ENCODE measurements at regions of chr18 and their contacts with region 1.

Region 1: DNA sequence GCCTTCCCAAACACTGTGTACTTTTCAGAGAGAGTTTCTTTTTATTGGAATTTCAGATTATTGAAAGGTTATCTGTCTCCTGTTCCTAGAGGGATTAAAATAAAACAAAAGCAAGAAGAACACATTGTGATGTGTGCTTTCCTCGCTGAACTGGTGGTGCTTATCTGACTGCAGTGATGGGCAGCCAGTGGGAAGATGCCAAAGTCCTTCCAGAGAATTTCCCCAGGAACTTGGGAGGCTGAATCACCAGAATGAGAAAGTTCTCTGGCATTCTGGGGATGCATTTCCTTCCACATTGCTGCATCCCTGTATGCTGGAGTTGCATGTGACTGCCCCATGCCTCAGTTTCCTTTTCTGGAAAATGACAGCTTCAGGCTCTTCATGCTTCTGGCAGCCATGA is 53.9 kb upstream of the SEC11C start:
- DNase-seq: no peak
- ATAC-seq: no peak
- H3K4me3 ChIP-seq: no peak overlapping the region
- H3K4me3 Mint-ChIP-seq: no peak overlapping the region
- H3K27ac ChIP-seq: no peak overlapping the region
- H3K27ac Mint-ChIP-seq: no peak overlapping the region
- H3K4me1 ChIP-seq: peaks cover 0 to 8% of the 10 kb centered on the region in 2 donors
- H3K4me1 Mint-ChIP-seq: peaks cover 3 to 18% (median 13%) of the 10 kb centered on the region in 7 donors
- H3K27me3 ChIP-seq: peaks cover 0 to 4% of the 10 kb centered on the region in 2 donors
- H3K27me3 Mint-ChIP-seq: peaks cover 12 to 22% (median 20%) of the 10 kb centered on the region in 5 donors

Region 2: DNA sequence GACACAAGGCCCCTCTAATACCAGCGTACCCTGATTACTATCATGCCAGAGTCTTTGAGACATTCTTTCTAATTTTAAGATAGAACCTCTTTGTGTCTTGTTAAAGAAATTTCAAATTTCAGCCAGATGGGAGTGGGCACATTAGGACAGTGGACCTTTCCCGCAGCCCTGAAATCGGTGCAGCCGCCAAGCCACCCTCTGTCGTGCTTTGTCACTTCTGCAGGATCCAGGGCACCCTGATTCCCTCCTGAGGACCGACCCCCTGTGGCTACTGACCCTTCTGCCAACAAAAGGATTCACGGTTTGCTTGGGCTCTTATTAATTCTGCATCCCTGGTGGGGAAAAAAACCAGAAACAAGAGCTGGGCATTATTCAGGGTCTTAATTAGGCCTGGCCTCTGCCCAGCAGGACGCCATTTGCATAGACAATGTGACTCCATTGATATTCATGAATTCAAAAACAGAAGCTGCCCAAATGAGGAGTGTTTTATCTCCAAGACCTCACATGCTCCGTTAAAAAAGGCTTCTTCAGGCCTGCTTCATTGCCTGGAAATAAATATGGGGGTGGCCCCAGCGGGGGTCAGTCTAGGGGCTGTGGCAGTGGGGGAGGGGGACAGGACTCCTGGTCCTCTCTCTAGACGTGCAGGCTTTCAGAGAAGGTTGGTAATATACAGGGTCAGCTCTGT is 573.8 kb before region 1 on chr18:
- CTCF ChIA-PET with region 1: no interaction called
- POLR2A ChIA-PET with region 1: no interaction called
- intact Hi-C with region 1: loop called in 1 of 2 experiments (anchors 5 kb)
- DNase-seq: no peak
- ATAC-seq: no peak
- H3K4me3 ChIP-seq: no peak overlapping the region
- H3K4me3 Mint-ChIP-seq: no peak overlapping the region
- H3K27ac ChIP-seq: no peak overlapping the region
- H3K27ac Mint-ChIP-seq: no peak overlapping the region
- H3K4me1 ChIP-seq: no peaks in the 10 kb centered on the region
- H3K4me1 Mint-ChIP-seq: no peaks in the 10 kb centered on the region
- H3K27me3 ChIP-seq: no peaks in the 10 kb centered on the region
- H3K27me3 Mint-ChIP-seq: peaks cover 0 to 7% (median 0%) of the 10 kb centered on the region in 5 donors

Region 3: DNA sequence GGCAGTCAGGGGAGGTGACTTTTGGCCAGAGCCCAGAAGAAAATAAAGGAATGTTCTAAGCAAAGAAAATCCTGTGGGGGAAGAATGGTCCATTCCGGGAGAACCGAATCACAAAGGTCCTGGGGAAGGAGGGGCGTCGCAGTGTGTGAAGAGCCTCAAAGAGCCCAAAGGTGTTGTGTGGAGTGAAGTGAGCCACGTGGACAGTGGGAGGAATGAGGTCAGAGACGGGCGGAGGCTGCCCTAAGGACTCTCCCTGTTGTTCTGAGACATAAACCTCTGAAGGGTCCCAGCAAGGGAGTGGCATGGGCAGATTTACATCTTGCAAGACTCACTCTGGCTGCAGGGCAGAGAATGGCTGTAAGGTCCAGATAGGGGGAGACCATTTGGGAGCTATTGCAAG is 37.4 kb before region 1 on chr18:
- CTCF ChIA-PET with region 1: no interaction called
- POLR2A ChIA-PET with region 1: no interaction called
- intact Hi-C with region 1: no loop called
- DNase-seq: no peak
- ATAC-seq: no peak
- H3K4me3 ChIP-seq: no peak overlapping the region
- H3K4me3 Mint-ChIP-seq: no peak overlapping the region
- H3K27ac ChIP-seq: no peak overlapping the region
- H3K27ac Mint-ChIP-seq: no peak overlapping the region
- H3K4me1 ChIP-seq: no peaks in the 10 kb centered on the region
- H3K4me1 Mint-ChIP-seq: no peaks in the 10 kb centered on the region
- H3K27me3 ChIP-seq: peaks cover 0 to 3% of the 10 kb centered on the region in 2 donors
- H3K27me3 Mint-ChIP-seq: peaks cover 8 to 46% (median 32%) of the 10 kb centered on the region in 5 donors

Region 4: GRCh38 chr18:59220784-59221765 is 135.3 kb after region 1 on chr18:
- CTCF ChIA-PET with region 1: no interaction called
- POLR2A ChIA-PET with region 1: no interaction called
- intact Hi-C with region 1: loop called in 1 of 2 experiments (anchors 10 kb)
- DNase-seq: no peak
- ATAC-seq: no peak
- H3K4me3 ChIP-seq: no peak overlapping the region
- H3K4me3 Mint-ChIP-seq: peak overlapping the region in 5 of 10 donors; percentile 20 to 52 (median 25)
- H3K27ac ChIP-seq: no peak overlapping the region
- H3K27ac Mint-ChIP-seq: no peak overlapping the region
- H3K4me1 ChIP-seq: no peaks in the 10 kb centered on the region
- H3K4me1 Mint-ChIP-seq: peaks cover 5 to 15% (median 11%) of the 10 kb centered on the region in 7 donors
- H3K27me3 ChIP-seq: peaks cover 1 to 14% of the 10 kb centered on the region in 2 donors
- H3K27me3 Mint-ChIP-seq: peaks cover 65 to 84% (median 82%) of the 10 kb centered on the region in 5 donors

Measured in naive thymus-derived CD4-positive, alpha-beta T cell (primary cell).